Head of caudate nucleus (tissue), 42 donors: ENCODE measurements at regions of chr21 and their contacts with region 1.

Region 1: GRCh38 chr21:37366482-37367316 is at the start of gene DYRK1A:
- DNase-seq: peak; percentile 97 to 100 (median 99)

Region 2: DNA sequence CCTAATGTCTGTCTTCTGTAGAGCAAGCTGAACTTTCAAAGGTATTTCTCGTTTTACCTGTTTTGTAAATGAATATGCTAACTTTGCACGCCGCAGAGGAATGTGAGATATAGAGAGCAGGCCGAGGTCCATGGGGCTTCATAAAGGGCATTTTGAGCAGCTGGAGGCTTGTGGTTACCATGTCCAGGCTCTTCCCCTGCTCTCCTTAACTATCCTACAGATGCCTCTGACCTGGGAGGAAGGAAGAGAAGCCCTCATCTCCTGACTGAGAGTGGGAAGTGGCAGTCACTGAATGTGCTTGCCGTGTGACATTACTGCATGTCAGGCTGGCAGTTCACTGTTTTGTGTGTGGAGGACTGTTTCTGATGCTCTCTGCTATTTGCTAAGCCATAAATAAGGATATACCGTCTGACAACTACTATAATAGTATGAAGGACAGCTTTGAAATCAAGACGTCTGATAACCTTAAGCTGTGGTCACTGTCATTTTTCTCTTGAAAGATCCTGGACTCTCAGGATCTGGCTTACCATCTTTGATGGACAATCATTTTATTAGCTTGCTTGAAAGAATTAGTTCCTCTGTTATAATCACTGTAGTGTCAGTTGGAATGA is 92.1 kb after region 1 on chr21:
- intact Hi-C with region 1: loop called (anchors 5 kb)
- DNase-seq: peak in 2 of 42 donors; percentile 17 to 25

Region 3: DNA sequence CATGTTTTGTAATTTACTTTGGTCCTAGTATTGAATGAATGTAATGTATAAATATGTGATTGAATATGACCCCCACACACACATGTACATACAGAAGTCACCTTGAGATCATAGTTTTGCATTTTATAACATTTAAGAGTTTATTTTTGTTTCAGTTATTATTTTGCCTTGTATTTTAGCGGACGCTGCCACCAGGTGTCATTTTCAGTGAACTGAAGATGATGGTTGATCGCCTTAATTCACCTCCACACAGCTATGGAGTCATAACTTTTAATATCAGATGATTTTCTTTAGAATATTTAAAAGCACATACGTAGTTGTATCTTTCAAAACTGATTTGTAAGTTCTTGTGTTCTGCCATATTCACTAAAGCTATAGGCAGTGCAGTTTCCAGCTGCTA is 130.3 kb after region 1 on chr21:
- intact Hi-C with region 1: no loop called
- DNase-seq: no peak

Region 4: GRCh38 chr21:37563641-37564340 is 197.1 kb after region 1 on chr21:
- intact Hi-C with region 1: loop called (anchors 5 kb)
- DNase-seq: peak; percentile 88 to 98 (median 95)